Astrocyte of the cerebellum (primary cell): ENCODE measurements at regions of chr12 and their contacts with region 1.

Region 1: DNA sequence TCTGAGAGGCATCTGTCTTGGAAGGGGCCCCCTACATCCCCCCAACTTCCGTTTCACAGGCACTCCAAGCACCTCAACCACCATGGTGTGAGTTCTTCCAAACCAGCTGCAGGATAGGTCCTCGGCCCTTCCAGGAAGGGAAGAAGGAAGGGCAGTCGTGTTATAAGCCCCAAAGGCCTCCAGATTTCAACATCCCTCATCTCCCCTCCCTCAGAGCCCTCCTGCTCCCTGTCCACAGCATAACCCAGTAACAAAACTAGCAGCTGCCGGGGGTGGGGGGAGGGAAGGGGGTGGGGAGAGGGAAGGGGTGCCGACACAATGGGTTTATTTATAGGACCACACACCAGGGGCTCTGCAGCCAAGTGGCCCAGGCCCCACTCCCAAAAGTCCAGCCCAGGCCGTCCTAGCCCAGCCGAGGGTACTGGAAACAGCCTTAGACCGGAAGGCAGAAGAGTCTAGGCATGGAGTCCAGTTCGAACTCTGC is 18.3 kb downstream of the NCKAP5L start:
- DNase-seq: no peak
- H3K4me3 ChIP-seq: no peak overlapping the region
- CTCF ChIP-seq: no peak

Region 2: GRCh38 chr12:49763006-49763591 is 46.8 kb before region 1 on chr12:
- in situ Hi-C with region 1: loop called (anchors 10 kb)
- DNase-seq: no peak
- H3K4me3 ChIP-seq: no peak overlapping the region
- CTCF ChIP-seq: peak; percentile 78